ENCODE measurements at regions of chr7 and their contacts with region 1.

Region 1: DNA sequence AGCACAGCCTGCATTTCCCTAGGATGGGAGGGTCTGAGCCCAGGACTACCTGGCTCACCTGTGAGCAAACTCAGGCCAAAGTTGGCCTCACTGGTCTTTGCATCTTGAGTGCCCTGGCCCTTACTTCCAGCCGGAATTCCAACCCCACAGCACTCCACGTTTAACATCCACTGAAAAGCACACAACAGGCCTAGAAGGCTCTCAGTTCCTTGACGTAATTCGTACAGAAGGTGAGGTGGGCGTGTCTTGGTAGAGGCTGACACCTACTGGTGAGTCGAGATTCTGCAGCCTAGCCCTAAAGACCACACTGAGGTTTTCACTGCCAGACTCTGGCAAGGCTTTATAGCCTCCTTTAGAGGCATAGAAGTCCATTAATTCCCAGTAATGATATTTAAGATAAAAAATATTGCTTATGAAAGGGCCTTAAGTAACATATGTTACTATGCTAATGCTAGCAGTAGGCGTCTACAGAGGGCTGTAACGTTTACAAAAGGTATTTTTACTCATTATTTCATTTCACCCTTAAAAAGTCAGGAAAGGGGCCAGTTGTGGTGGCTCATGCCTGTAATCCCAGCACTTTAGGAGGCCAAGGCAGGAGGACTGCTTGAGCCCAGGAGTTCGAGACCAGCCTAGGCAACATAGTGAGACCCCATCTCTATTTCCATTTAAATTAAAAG is 95.8 kb downstream of the HIP1 start:
- DNase-seq: no peak
- H3K4me3 ChIP-seq: no peak overlapping the region
- H3K27ac ChIP-seq: peak overlapping the region in 1 of 8 donors; percentile 28
- H3K4me1 ChIP-seq: peaks cover 2 to 27% (median 15%) of the 10 kb centered on the region in 6 donors
- H3K27me3 ChIP-seq: peaks cover 0 to 5% (median 0%) of the 10 kb centered on the region in 7 donors
- CTCF ChIP-seq: peak; percentile 75 to 97 (median 89)
- POLR2A ChIP-seq: no peak

Region 2: GRCh38 chr7:75546237-75547015 is 96.5 kb before region 1 on chr7:
- intact Hi-C with region 1: no loop called
- DNase-seq: peak; percentile 3
- H3K4me3 ChIP-seq: no peak overlapping the region
- H3K27ac ChIP-seq: no peak overlapping the region
- H3K4me1 ChIP-seq: no peaks in the 10 kb centered on the region
- H3K27me3 ChIP-seq: no peaks in the 10 kb centered on the region
- CTCF ChIP-seq: no peak
- POLR2A ChIP-seq: no peak

Region 3: DNA sequence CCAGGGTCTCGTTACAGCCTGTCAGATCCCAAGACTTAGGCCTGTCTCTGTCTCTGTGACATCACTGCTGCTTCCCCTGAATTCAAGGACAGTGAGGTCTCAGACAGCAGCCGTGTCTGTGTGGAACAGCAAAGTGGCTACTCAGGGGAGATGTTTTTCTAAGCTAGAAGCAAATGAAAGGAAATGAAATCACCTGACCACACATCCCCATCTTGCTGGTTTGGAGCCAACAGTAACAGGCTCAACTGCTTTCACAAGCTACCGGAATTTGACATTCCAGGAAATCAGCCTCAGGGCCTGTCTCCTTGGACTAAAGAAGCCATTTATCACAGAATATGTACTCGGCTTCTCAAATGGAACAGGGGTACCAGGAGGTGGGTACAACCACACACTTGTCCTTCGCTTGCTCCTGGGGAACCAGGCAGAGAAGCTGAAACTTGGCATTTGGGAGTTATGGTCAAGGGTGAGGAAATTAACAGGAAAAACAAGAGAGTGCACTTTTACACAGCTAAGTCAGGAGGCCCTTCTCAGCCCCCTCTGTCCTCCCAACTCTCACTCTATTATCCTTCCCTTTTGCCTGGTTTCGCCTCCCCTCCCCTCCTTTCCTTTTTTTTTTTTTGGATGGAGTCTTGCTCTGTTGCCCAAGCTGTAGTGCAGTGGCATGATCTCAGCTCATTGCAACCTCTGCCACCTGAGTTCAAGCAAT is 77.7 kb before region 1 on chr7:
- intact Hi-C with region 1: loop called (anchors 10 kb)
- DNase-seq: no peak
- H3K4me3 ChIP-seq: no peak overlapping the region
- H3K27ac ChIP-seq: peak overlapping the region in 7 of 8 donors; percentile 44 to 73 (median 67)
- H3K4me1 ChIP-seq: peaks cover 0 to 34% (median 8%) of the 10 kb centered on the region in 6 donors
- H3K27me3 ChIP-seq: no peaks in the 10 kb centered on the region
- CTCF ChIP-seq: no peak
- POLR2A ChIP-seq: no peak

Region 4: GRCh38 chr7:75814407-75814947 is 171.5 kb after region 1 on chr7:
- intact Hi-C with region 1: no loop called
- DNase-seq: no peak
- H3K4me3 ChIP-seq: no peak overlapping the region
- H3K27ac ChIP-seq: no peak overlapping the region
- H3K4me1 ChIP-seq: peaks cover 0 to 11% (median 0%) of the 10 kb centered on the region in 6 donors
- H3K27me3 ChIP-seq: peaks cover 0 to 17% (median 0%) of the 10 kb centered on the region in 7 donors
- CTCF ChIP-seq: no peak
- POLR2A ChIP-seq: no peak

Measured in spleen (tissue), 13 donors.